ENCODE measurements at regions of chr5 and their contacts with region 1.

Region 1: GRCh38 chr5:163421673-163422072 is 15.7 kb upstream of the CCNG1 start:
- DNase-seq: no peak
- H3K4me3 ChIP-seq: no peak overlapping the region
- H3K4me3 Mint-ChIP-seq: no peak overlapping the region
- H3K27ac ChIP-seq: no peak overlapping the region
- H3K27ac Mint-ChIP-seq: no peak overlapping the region
- H3K4me1 ChIP-seq: no peaks in the 10 kb centered on the region
- H3K4me1 Mint-ChIP-seq: no peaks in the 10 kb centered on the region
- H3K27me3 ChIP-seq: no peaks in the 10 kb centered on the region
- H3K27me3 Mint-ChIP-seq: peaks cover 19 to 28% of the 10 kb centered on the region in 2 donors

Region 2: DNA sequence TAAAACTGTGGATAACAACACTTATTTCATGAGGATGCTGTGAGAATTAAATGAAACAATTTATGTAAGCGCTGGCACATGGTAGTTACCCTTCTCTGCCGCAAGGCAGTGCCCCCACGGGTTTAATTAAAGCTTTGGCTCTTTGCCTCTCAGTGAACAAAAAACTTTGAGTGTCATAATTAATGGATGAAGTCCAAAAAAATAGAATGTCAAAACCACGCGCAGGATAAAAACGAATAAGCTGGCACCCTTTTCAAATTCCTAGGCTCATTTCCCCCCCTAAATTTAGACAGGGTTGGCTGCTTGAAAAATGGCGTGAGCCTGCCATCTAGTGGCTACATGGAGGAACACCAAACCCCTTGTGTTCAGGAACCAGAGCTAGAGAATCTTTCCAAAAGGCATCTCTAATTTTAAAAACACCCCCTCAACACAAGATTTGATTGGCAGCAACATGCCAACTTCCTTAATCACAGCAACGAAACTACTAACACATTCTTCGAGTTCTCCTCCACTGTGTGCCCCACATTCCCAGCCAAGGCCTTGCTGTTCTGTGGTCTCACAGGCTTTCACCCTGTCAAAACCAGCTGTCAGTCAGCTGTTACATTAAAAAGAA is 13.3 kb before region 1 on chr5:
- CTCF ChIA-PET with region 1: interaction called, 10 read pairs
- POLR2A ChIA-PET with region 1: no interaction called
- DNase-seq: peak; percentile 30 to 72 (median 41)
- H3K4me3 ChIP-seq: no peak overlapping the region
- H3K4me3 Mint-ChIP-seq: peak overlapping the region in 2 of 7 donors; percentile 5 to 33
- H3K27ac ChIP-seq: no peak overlapping the region
- H3K27ac Mint-ChIP-seq: no peak overlapping the region
- H3K4me1 ChIP-seq: no peaks in the 10 kb centered on the region
- H3K4me1 Mint-ChIP-seq: peaks cover 0 to 2% (median 0%) of the 10 kb centered on the region in 3 donors
- H3K27me3 ChIP-seq: no peaks in the 10 kb centered on the region
- H3K27me3 Mint-ChIP-seq: peaks cover 13 to 28% of the 10 kb centered on the region in 2 donors